ENCODE measurements at regions of chr2 and their contacts with region 1.

Region 1: GRCh38 chr2:24046930-24047702 is at the start of gene WDCP:
- DNase-seq: peak; percentile 99
- H3K4me3 Mint-ChIP-seq: peak within 1 kb of the TSS; percentile 97
- H3K27ac Mint-ChIP-seq: peak within 1 kb of the TSS; percentile 83
- H3K4me1 Mint-ChIP-seq: peaks cover 24% of the 10 kb centered on the region
- H3K27me3 Mint-ChIP-seq: no peaks in the 10 kb centered on the region
- CTCF ChIP-seq: no peak
- total RNA-seq, gene WDCP: 9.0 and 11.2 TPM in 2 replicates

Region 2: DNA sequence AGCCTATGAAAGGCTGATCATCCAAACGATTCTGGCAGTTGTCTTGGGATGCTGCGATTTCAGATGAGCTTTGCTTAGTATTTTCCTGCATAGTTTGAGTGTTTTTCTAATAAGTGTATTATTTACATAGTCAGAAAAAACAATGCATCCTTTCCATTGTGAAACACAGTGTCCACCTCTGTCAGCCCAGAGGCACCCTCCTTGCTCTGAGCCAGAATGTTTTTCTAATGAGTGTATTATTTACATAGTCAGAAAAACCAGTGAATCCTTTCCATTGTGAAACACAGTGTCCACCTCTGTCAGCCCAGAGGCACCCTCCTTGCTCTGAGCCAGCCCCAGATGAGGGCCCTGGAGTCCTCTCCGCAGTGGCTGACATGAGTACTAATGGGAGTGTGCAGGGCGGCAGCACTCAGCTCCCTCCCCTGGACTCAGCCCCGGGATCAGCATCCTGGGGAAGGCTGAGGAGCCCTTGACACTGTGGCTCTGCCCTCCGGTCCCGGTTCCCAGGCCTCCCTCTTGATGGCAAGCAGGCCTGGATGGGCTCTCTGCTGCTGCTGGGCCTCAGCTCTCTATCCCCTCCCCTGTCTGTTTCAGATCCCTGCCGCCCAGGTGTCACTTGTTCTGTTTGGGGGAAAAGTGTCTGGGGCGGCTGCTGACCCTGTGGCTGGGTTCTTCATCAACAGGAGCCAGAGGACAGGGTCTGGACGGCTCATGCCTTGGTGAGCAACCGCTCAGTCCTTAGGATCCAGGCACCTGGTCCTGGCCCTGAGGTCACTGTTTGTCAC is 31.4 kb before region 1 on chr2:
- CTCF ChIA-PET with region 1: no interaction called
- POLR2A ChIA-PET with region 1: interaction called, 8 read pairs
- intact Hi-C with region 1: loop called (anchors 1 kb)
- DNase-seq: peak; percentile 93
- H3K4me3 Mint-ChIP-seq: no peak overlapping the region
- H3K27ac Mint-ChIP-seq: peak overlapping the region; percentile 81
- H3K4me1 Mint-ChIP-seq: peaks cover 14% of the 10 kb centered on the region
- H3K27me3 Mint-ChIP-seq: no peaks in the 10 kb centered on the region
- CTCF ChIP-seq: no peak

Region 3: DNA sequence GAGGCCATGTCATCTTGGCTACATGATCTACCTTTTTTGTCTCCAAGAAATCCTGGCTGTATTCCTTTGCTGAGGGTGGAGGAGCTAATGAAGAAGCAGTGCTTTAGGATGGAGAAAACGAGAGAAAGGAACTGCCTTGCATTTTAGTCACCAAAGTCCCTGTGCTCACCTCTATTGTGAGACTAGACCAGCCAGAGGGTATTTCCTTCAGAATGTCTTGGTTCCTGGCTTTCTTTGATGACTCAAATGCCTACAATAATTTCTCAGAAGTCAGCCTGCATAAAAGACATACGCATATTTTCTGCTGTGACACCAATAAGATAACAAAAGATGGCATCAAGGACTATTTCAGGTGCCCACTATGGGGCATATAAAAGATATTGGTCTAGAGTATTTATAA is 18.2 kb after region 1 on chr2:
- CTCF ChIA-PET with region 1: interaction called, 6 read pairs
- POLR2A ChIA-PET with region 1: interaction called, 21 read pairs
- intact Hi-C with region 1: no loop called
- DNase-seq: no peak
- H3K4me3 Mint-ChIP-seq: no peak overlapping the region
- H3K27ac Mint-ChIP-seq: no peak overlapping the region
- H3K4me1 Mint-ChIP-seq: no peaks in the 10 kb centered on the region
- H3K27me3 Mint-ChIP-seq: no peaks in the 10 kb centered on the region
- CTCF ChIP-seq: no peak